BJ (cell line): ENCODE measurements at regions of chr3 and their contacts with region 1.

Region 1: DNA sequence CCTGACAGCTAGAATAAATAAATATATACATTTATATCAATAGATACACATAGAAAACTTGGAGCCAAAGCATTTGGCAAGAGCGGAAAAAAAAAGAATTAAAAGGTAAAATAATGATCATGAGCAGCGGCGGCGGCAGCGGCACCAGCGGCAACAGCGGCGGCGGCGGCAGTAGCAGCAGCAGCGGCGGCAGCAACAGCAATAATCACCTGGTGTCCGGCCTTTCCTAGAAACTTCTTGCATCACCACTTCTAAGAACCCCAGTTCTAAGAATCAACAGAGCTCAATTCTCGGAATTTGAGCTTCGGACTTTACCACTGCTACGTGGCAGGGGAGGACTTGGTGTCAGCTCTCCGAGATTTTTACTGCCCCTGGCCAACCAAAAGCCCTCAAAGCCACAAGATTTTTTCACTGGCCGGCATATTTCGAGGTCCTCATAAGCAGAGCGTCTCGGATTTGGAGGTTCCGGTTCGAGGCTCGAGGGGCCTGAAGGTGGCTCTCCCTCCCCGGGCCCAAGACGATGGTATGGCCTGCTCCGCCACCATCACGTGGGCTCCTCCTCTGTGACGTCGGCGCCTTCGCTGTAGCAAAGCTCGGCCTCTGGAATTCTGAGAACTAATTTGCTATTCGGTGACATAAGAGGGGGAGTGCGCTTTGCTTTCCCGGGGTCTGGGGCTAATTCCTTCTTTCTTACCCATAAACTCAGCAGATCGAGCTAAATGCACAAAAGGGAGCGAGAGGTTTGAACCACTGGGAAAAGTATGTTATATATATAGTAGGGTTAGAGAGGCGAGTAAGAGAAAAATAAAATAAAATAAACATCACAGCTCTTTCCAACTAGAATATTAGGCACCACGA is at the start of gene BCL6:
- DNase-seq: peak; percentile 84
- H3K4me3 ChIP-seq: peak within 1 kb of the TSS; percentile 96
- H3K27me3 ChIP-seq: no peaks in the 10 kb centered on the region
- CTCF ChIP-seq: no peak
- polyA plus RNA-seq, gene BCL6: 14.1 and 17.4 TPM in 2 replicates

Region 2: GRCh38 chr3:187684880-187685279 is 60.5 kb before region 1 on chr3:
- CTCF ChIA-PET with region 1: no interaction called
- POLR2A ChIA-PET with region 1: no interaction called
- DNase-seq: no peak
- H3K4me3 ChIP-seq: no peak overlapping the region
- H3K27me3 ChIP-seq: peaks cover 5% of the 10 kb centered on the region
- CTCF ChIP-seq: no peak

Region 3: GRCh38 chr3:187758318-187758955 is 13.0 kb after region 1 on chr3:
- CTCF ChIA-PET with region 1: interaction called, 31 read pairs
- POLR2A ChIA-PET with region 1: interaction called, 3 read pairs
- DNase-seq: no peak
- H3K4me3 ChIP-seq: no peak overlapping the region
- H3K27me3 ChIP-seq: no peaks in the 10 kb centered on the region
- CTCF ChIP-seq: no peak

Region 4: GRCh38 chr3:187955076-187955952 is 209.9 kb after region 1 on chr3:
- CTCF ChIA-PET with region 1: interaction called, 14 read pairs
- POLR2A ChIA-PET with region 1: interaction called, 17 read pairs
- DNase-seq: peak; percentile 75
- H3K4me3 ChIP-seq: no peak overlapping the region
- H3K27me3 ChIP-seq: no peaks in the 10 kb centered on the region
- CTCF ChIP-seq: no peak

Region 5: GRCh38 chr3:188154014-188154808 is 408.8 kb after region 1 on chr3 and contains the start of gene LPP:
- CTCF ChIA-PET with region 1: interaction called, 15 read pairs
- POLR2A ChIA-PET with region 1: interaction called, 10 read pairs
- DNase-seq: no peak
- H3K4me3 ChIP-seq: peak within 1 kb of the TSS; percentile 79
- H3K27me3 ChIP-seq: no peaks in the 10 kb centered on the region
- CTCF ChIP-seq: no peak
- polyA plus RNA-seq, gene LPP: 33.3 and 60.0 TPM in 2 replicates

Region 6: GRCh38 chr3:188270423-188270972 is 525.1 kb after region 1 on chr3:
- CTCF ChIA-PET with region 1: interaction called, 45 read pairs
- POLR2A ChIA-PET with region 1: interaction called, 17 read pairs
- DNase-seq: peak; percentile 77
- H3K4me3 ChIP-seq: no peak overlapping the region
- H3K27me3 ChIP-seq: no peaks in the 10 kb centered on the region
- CTCF ChIP-seq: no peak

Region 7: GRCh38 chr3:188506446-188506845 is 761.0 kb after region 1 on chr3:
- CTCF ChIA-PET with region 1: interaction called, 4 read pairs
- POLR2A ChIA-PET with region 1: interaction called, 18 read pairs
- DNase-seq: no peak
- H3K4me3 ChIP-seq: no peak overlapping the region
- H3K27me3 ChIP-seq: no peaks in the 10 kb centered on the region
- CTCF ChIP-seq: no peak

Region 8: DNA sequence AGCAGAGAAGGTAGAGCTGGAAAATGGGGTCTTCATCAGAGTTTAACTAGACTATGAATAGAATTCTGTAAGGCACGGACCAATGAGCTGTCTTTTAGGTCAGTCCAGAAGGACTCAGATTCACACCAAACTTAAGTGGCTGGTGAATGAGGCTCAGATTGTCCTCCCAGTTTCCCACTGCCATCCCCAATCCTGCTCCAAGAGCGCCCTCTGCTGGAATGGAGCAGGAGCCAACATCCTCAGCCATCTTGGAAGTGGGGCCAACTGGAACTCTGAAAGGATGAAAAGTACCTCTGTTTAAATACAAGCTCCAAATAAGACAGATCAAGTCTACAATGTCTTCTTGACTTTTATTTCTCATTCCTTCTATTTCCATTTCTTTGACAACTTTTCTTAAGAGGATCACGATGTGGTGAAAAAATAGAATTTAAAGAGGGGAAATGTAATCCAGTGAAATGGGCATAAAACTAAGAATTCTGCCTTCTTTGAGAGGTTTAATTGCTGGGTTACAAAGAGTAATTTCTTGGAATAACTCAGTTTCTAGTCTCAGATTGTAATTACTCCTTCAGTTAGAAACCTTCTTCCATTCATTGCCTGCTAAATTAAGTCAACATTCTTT is 1209.3 kb after region 1 on chr3:
- CTCF ChIA-PET with region 1: interaction called, 250 read pairs
- POLR2A ChIA-PET with region 1: no interaction called
- DNase-seq: no peak
- H3K4me3 ChIP-seq: no peak overlapping the region
- H3K27me3 ChIP-seq: no peaks in the 10 kb centered on the region
- CTCF ChIP-seq: peak; percentile 97